ENCODE measurements at regions of chr10 and their contacts with region 1.

Region 1: GRCh38 chr10:58291538-58292174 is 22.7 kb downstream of the CISD1 start:
- DNase-seq: peak; percentile 61
- H3K4me3 Mint-ChIP-seq: no peak overlapping the region
- H3K27ac Mint-ChIP-seq: peak overlapping the region; percentile 2
- H3K4me1 Mint-ChIP-seq: peaks cover 6% of the 10 kb centered on the region
- H3K27me3 Mint-ChIP-seq: no peaks in the 10 kb centered on the region
- CTCF ChIP-seq: peak; percentile 57

Region 2: DNA sequence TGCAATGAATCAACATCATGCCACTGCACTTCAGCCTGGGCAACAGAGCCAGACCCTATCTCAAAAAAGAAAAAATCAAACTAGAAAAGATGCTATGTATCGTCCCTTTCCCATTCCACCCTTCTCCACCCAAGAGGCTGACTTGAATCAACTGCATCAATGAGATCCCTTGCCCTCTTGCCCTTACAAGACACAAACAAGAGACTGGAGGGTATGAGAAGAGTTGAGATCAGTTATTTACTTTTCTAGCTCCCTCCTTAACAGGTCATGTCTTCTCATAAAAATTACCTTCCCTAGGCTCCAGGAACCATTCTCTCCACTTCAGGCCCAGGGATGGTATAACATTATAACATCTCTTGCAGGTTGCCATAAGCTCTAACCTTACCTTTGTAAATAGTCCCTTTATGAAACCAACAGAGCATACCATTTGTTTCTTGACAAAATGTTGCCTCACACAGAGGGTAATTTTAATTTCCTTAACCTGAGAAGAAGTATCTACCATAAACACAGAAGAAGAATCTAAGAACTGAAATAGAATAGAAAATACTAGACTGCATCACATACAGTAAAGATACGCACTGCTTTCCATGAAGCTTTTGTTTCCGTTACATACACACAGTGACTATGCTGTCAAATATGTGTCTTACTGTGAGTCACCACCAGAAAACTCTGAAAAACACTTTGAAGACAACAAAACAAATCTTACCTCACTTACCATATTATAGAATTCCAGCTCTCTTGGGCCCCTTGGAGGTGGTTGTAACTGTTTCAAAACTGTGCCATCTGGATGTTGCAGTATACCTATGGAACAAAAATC is 54.4 kb before region 1 on chr10:
- CTCF ChIA-PET with region 1: interaction called, 10 read pairs
- POLR2A ChIA-PET with region 1: no interaction called
- intact Hi-C with region 1: no loop called
- DNase-seq: peak; percentile 78
- H3K4me3 Mint-ChIP-seq: peak overlapping the region; percentile 22
- H3K27ac Mint-ChIP-seq: peak overlapping the region; percentile 82
- H3K4me1 Mint-ChIP-seq: peaks cover 30% of the 10 kb centered on the region
- H3K27me3 Mint-ChIP-seq: no peaks in the 10 kb centered on the region
- CTCF ChIP-seq: no peak

Region 3: GRCh38 chr10:58275908-58276307 is 15.7 kb before region 1 on chr10:
- CTCF ChIA-PET with region 1: interaction called, 33 read pairs
- POLR2A ChIA-PET with region 1: interaction called, 4 read pairs
- intact Hi-C with region 1: no loop called
- DNase-seq: no peak
- H3K4me3 Mint-ChIP-seq: no peak overlapping the region
- H3K27ac Mint-ChIP-seq: no peak overlapping the region
- H3K4me1 Mint-ChIP-seq: peaks cover 36% of the 10 kb centered on the region
- H3K27me3 Mint-ChIP-seq: no peaks in the 10 kb centered on the region
- CTCF ChIP-seq: no peak

Region 4: GRCh38 chr10:58280982-58281752 is 10.5 kb before region 1 on chr10:
- CTCF ChIA-PET with region 1: interaction called, 16 read pairs
- POLR2A ChIA-PET with region 1: interaction called, 4 read pairs
- intact Hi-C with region 1: no loop called
- DNase-seq: no peak
- H3K4me3 Mint-ChIP-seq: no peak overlapping the region
- H3K27ac Mint-ChIP-seq: peak overlapping the region; percentile 47
- H3K4me1 Mint-ChIP-seq: peaks cover 17% of the 10 kb centered on the region
- H3K27me3 Mint-ChIP-seq: no peaks in the 10 kb centered on the region
- CTCF ChIP-seq: no peak

Region 5: DNA sequence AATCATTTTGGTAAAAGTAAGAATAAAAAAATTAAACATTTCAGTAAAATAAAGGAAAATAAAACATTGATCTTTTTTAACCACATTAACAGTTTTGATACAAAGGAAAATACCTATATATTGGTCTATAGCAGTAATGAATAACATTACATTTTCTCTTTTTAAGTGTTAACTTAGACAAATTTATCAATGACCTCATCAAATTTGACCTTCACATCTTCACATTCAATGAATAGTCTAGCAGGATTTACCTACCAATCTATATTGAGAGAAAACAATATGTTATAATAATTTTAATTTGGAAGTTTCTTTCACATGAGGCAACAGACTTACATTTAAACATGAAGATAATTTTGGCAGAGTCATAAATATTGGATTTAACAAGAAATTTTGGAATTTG is 25.2 kb after region 1 on chr10:
- CTCF ChIA-PET with region 1: no interaction called
- POLR2A ChIA-PET with region 1: no interaction called
- intact Hi-C with region 1: no loop called
- DNase-seq: no peak
- H3K4me3 Mint-ChIP-seq: no peak overlapping the region
- H3K27ac Mint-ChIP-seq: no peak overlapping the region
- H3K4me1 Mint-ChIP-seq: no peaks in the 10 kb centered on the region
- H3K27me3 Mint-ChIP-seq: no peaks in the 10 kb centered on the region
- CTCF ChIP-seq: no peak

Region 6: DNA sequence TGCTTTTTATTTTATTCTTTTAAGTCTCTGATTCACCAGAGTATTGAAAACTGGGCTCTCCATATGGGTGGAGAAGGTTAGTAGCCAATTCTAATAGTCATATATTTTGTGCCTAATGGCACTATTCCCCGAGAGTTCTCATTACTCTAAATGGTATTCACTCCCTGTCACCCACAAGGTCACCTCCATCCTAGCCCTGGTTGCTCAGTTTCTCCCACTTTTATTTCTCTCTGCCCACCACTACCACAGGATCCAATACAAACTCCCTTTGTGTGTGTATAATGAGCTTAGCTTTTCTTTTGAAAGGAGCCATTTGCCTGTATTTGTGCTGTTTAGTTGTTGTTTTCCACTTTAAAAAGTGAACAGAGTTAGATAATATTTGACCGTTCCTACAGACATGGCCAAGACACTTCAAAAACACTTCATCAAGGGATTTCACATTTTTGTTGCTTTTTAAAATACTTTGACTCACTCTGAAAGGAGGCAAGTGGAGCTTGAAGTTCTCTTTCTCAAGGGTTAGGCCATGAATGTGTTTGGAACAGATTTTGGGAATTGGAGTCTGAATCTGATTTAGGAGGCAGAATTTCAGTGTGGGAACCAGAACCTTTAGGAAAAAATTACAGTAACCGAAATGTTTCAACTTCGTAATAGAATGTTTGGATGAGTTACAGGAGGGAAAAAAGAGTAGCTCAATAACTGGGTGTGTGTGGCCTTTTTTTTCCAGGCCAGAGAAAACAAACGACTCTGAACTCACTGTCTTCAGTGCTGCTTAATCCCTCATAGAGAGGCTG is 542.3 kb after region 1 on chr10:
- CTCF ChIA-PET with region 1: no interaction called
- POLR2A ChIA-PET with region 1: no interaction called
- intact Hi-C with region 1: no loop called
- DNase-seq: no peak
- H3K4me3 Mint-ChIP-seq: no peak overlapping the region
- H3K27ac Mint-ChIP-seq: peak overlapping the region; percentile 27
- H3K4me1 Mint-ChIP-seq: no peaks in the 10 kb centered on the region
- H3K27me3 Mint-ChIP-seq: no peaks in the 10 kb centered on the region
- CTCF ChIP-seq: no peak

Measured in MCF 10A (cell line).